ENCODE measurements at regions of chr20 and their contacts with region 1.

Region 1: GRCh38 chr20:53828682-53829254 is 235.1 kb upstream of the ZNF217 start:
- DNase-seq: peak; percentile 95
- ATAC-seq: peak; percentile 79
- H3K4me3 ChIP-seq: peak overlapping the region; percentile 41; the same call in 1 of the 2 replicates
- H3K27ac ChIP-seq: peak overlapping the region; percentile 99
- H3K4me1 ChIP-seq: peaks cover 6% of the 10 kb centered on the region
- H3K27me3 ChIP-seq: no peaks in the 10 kb centered on the region
- CTCF ChIP-seq: peak; percentile 32; the same call in 1 of the 2 replicates
- POLR2A ChIP-seq: no peak; the same call in 1 of the 2 replicates
- RAD21 ChIP-seq: peak; percentile 60

Region 2: DNA sequence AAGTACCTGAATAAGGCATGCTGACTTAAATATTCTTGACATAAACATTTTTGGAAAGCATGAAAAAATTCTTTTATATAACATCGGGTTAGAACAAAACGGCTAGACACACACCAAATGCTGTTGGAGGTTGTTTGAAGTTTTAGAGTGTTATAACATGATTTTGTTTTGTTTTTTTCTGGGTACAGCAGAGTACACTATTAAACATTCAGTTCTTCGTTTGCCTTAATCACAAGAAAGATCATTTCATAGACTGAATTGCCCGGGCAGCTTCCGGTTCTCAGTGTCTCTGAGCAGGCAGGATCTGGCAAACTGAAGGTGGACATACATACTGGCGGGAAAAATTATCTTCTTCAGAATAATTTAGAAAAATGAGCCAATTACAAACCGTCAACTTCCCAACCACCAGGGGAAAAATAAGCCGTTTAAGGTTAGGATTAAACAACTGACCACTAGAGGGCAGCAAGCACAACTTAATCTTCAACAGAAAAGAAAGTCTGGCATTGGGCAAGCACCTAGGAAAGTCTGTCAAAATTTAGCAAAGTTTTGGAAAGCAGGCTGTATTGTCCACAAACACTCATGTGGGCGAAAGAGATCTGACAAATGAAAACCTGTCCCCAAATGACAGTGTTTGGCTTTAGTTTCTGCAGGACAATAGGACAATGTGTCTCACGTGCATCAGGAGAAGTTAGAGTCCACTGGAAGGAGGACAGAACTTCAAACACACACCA is 250.1 kb before region 1 on chr20:
- CTCF ChIA-PET with region 1: no interaction called
- POLR2A ChIA-PET with region 1: no interaction called
- dilution Hi-C with region 1: no loop called
- in situ Hi-C with region 1: no loop called
- intact Hi-C with region 1: loop called (anchors 2 kb)
- DNase-seq: peak; percentile 89
- ATAC-seq: peak; percentile 64
- H3K4me3 ChIP-seq: no peak overlapping the region
- H3K27ac ChIP-seq: peak overlapping the region; percentile 60
- H3K4me1 ChIP-seq: peaks cover 18% of the 10 kb centered on the region
- H3K27me3 ChIP-seq: no peaks in the 10 kb centered on the region
- CTCF ChIP-seq: peak; percentile 96
- POLR2A ChIP-seq: peak; percentile 39; the same call in 1 of the 2 replicates
- RAD21 ChIP-seq: peak; percentile 90

Region 3: GRCh38 chr20:53594068-53595017 is 234.4 kb before region 1 on chr20:
- CTCF ChIA-PET with region 1: interaction called, 3 read pairs
- POLR2A ChIA-PET with region 1: no interaction called
- dilution Hi-C with region 1: no loop called
- in situ Hi-C with region 1: no loop called
- intact Hi-C with region 1: loop called (anchors 1 kb)
- DNase-seq: peak; percentile 90
- ATAC-seq: peak; percentile 83
- H3K4me3 ChIP-seq: peak overlapping the region; percentile 97
- H3K27ac ChIP-seq: peak overlapping the region; percentile 97
- H3K4me1 ChIP-seq: peaks cover 5% of the 10 kb centered on the region
- H3K27me3 ChIP-seq: no peaks in the 10 kb centered on the region
- CTCF ChIP-seq: peak; percentile 24; the same call in 1 of the 2 replicates
- POLR2A ChIP-seq: 0 out of 2 replicates have a peak, but pooled peaks have one; percentile 30
- RAD21 ChIP-seq: 0 out of 2 replicates have a peak, but pooled peaks have one; percentile 20

Region 4: DNA sequence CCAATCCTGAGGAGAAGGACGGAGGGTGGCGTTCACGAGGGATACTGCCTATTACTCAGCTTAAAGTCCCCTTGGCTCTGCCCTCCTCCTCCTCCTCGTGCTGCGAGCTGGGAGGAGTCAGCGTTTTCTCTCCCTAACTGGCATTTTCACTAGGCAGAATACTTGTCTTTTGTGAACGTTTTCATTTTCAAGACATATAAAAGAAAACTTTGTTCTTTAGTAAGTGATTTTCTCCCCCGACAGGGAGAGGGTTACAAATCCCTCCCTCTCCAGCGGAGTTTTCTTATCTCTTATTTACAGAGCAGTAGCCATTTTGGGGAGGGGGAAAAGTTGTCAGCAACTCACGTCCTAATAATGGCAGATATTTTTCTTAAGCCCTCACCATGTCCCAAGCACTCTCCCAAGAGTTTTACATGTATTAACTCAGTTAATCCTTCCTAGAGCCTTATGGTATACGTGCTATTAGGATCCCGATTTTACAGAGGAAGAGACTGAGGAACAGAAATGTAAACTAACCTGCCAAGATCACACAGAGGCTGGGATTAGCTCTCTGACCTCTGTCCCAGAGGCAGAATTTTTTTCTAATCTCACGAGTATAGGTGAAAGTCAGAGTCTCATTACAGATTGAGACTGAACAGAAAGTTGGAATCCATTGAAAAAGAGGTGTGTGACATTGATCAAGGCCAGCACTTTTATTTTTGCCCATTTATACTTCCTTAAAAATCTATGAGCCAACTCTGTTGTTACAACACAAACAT is 205.1 kb before region 1 on chr20:
- CTCF ChIA-PET with region 1: no interaction called
- POLR2A ChIA-PET with region 1: no interaction called
- dilution Hi-C with region 1: no loop called
- in situ Hi-C with region 1: no loop called
- intact Hi-C with region 1: loop called (anchors 2 kb)
- DNase-seq: peak; percentile 77
- ATAC-seq: peak; percentile 87
- H3K4me3 ChIP-seq: peak overlapping the region; percentile 43
- H3K27ac ChIP-seq: peak overlapping the region; percentile 65
- H3K4me1 ChIP-seq: peaks cover 15% of the 10 kb centered on the region
- H3K27me3 ChIP-seq: no peaks in the 10 kb centered on the region
- CTCF ChIP-seq: 0 out of 2 replicates have a peak, but pooled peaks have one; percentile 12
- POLR2A ChIP-seq: peak; percentile 66
- RAD21 ChIP-seq: peak; percentile 14; the same call in 1 of the 2 replicates

Region 5: GRCh38 chr20:53706466-53707370 is 122.0 kb before region 1 on chr20:
- CTCF ChIA-PET with region 1: no interaction called
- POLR2A ChIA-PET with region 1: no interaction called
- dilution Hi-C with region 1: no loop called
- in situ Hi-C with region 1: no loop called
- intact Hi-C with region 1: no loop called
- DNase-seq: peak; percentile 83
- ATAC-seq: peak; percentile 58
- H3K4me3 ChIP-seq: no peak overlapping the region
- H3K27ac ChIP-seq: peak overlapping the region; percentile 71; the same call in 1 of the 2 replicates
- H3K4me1 ChIP-seq: peaks cover 18% of the 10 kb centered on the region
- H3K27me3 ChIP-seq: no peaks in the 10 kb centered on the region
- CTCF ChIP-seq: no peak
- POLR2A ChIP-seq: no peak
- RAD21 ChIP-seq: no peak

Region 6: GRCh38 chr20:53738039-53738944 is 90.5 kb before region 1 on chr20:
- CTCF ChIA-PET with region 1: no interaction called
- POLR2A ChIA-PET with region 1: interaction called, 3 read pairs
- dilution Hi-C with region 1: no loop called
- in situ Hi-C with region 1: no loop called
- intact Hi-C with region 1: loop called (anchors 2 kb)
- DNase-seq: peak; percentile 90
- ATAC-seq: peak; percentile 82
- H3K4me3 ChIP-seq: peak overlapping the region; percentile 22; the same call in 1 of the 2 replicates
- H3K27ac ChIP-seq: peak overlapping the region; percentile 75
- H3K4me1 ChIP-seq: peaks cover 28% of the 10 kb centered on the region
- H3K27me3 ChIP-seq: no peaks in the 10 kb centered on the region
- CTCF ChIP-seq: no peak
- POLR2A ChIP-seq: peak; percentile 75
- RAD21 ChIP-seq: no peak

Region 7: GRCh38 chr20:53773792-53774401 is 54.9 kb before region 1 on chr20:
- CTCF ChIA-PET with region 1: no interaction called
- POLR2A ChIA-PET with region 1: no interaction called
- dilution Hi-C with region 1: no loop called
- in situ Hi-C with region 1: no loop called
- intact Hi-C with region 1: loop called (anchors 2 kb)
- DNase-seq: peak; percentile 97
- ATAC-seq: peak; percentile 83
- H3K4me3 ChIP-seq: no peak overlapping the region
- H3K27ac ChIP-seq: peak overlapping the region; percentile 72; the same call in 1 of the 2 replicates
- H3K4me1 ChIP-seq: peaks cover 17% of the 10 kb centered on the region
- H3K27me3 ChIP-seq: no peaks in the 10 kb centered on the region
- CTCF ChIP-seq: no peak
- POLR2A ChIP-seq: no peak
- RAD21 ChIP-seq: peak; percentile 34; the same call in 1 of the 2 replicates

Region 8: DNA sequence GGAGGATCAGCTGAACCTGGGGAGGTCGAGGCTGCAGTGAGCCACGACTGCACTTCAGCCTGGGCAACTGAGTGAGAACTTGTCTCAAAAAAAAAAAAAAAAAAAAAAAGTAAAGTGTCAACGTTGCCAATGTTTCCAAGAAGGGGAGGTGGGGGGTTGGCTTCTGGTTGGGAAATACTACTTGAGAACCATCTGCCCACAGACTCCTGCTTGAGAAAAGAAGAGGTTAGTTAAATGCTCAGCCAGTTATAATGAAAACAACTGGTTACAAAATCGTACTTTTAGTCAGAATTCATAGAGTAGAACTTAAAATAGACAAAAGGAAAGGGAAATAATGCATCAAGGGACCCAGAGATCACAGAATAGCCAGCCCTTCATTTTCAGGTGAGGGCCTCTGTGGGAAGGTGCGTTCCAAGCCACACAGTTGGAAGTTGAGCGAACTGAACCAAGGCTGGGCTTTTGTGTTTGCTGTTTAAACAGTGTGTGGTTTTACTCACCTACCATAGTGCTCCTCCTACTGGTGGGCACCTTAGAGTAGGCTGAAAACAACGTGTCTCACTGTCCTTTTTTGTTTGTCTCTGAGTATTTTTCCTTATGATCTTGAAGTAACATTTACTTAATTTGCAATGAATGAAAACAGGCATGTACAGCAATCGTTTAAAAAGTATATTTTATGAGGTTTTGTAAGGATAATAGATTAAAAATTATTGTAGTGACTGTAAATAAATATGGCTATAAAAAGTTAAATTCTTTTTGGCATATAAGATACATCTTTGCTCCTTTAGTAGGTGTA is 40.9 kb after region 1 on chr20:
- CTCF ChIA-PET with region 1: no interaction called
- POLR2A ChIA-PET with region 1: no interaction called
- dilution Hi-C with region 1: no loop called
- in situ Hi-C with region 1: no loop called
- intact Hi-C with region 1: loop called (anchors 5 kb)
- DNase-seq: peak; percentile 74
- ATAC-seq: peak; percentile 17; the same call in 1 of the 2 replicates
- H3K4me3 ChIP-seq: no peak overlapping the region
- H3K27ac ChIP-seq: peak overlapping the region; percentile 50; the same call in 1 of the 2 replicates
- H3K4me1 ChIP-seq: peaks cover 29% of the 10 kb centered on the region
- H3K27me3 ChIP-seq: no peaks in the 10 kb centered on the region
- CTCF ChIP-seq: peak; percentile 68
- POLR2A ChIP-seq: no peak
- RAD21 ChIP-seq: peak; percentile 74

Region 9: GRCh38 chr20:53995949-53996348 is 167.2 kb after region 1 on chr20:
- CTCF ChIA-PET with region 1: no interaction called
- POLR2A ChIA-PET with region 1: no interaction called
- dilution Hi-C with region 1: no loop called
- in situ Hi-C with region 1: no loop called
- intact Hi-C with region 1: no loop called
- DNase-seq: no peak
- ATAC-seq: no peak
- H3K4me3 ChIP-seq: no peak overlapping the region
- H3K27ac ChIP-seq: no peak overlapping the region
- H3K4me1 ChIP-seq: no peaks in the 10 kb centered on the region
- H3K27me3 ChIP-seq: no peaks in the 10 kb centered on the region
- CTCF ChIP-seq: no peak
- POLR2A ChIP-seq: no peak
- RAD21 ChIP-seq: no peak

Region 10: DNA sequence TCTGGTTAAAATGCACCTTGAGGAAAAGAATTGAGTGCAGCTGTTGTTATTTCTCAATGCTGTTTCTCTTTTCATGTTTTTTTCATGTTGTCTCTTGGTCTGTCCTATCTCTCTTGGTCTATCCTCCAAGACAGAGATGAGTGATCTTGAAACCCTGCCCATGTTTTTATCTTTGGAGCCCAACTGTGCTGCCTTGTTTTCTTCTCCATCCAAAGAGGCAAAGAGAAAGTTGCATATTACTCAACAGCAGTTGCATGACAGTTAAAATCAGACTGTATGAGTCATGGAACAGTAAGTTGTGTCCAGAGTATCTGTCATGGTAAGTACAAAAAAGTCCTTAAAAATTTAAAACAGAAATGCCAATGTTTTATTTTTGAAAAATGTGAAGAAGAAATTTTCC is 215.4 kb after region 1 on chr20:
- CTCF ChIA-PET with region 1: no interaction called
- POLR2A ChIA-PET with region 1: no interaction called
- dilution Hi-C with region 1: no loop called
- in situ Hi-C with region 1: no loop called
- intact Hi-C with region 1: no loop called
- DNase-seq: peak; percentile 51
- ATAC-seq: no peak; the same call in 1 of the 2 replicates
- H3K4me3 ChIP-seq: no peak overlapping the region
- H3K27ac ChIP-seq: no peak overlapping the region
- H3K4me1 ChIP-seq: no peaks in the 10 kb centered on the region
- H3K27me3 ChIP-seq: no peaks in the 10 kb centered on the region; the same call in 1 of the 2 replicates
- CTCF ChIP-seq: no peak
- POLR2A ChIP-seq: no peak
- RAD21 ChIP-seq: no peak